CD8-positive, alpha-beta T cell (primary cell): ENCODE measurements at regions of chr14 and their contacts with region 1.

Region 1: DNA sequence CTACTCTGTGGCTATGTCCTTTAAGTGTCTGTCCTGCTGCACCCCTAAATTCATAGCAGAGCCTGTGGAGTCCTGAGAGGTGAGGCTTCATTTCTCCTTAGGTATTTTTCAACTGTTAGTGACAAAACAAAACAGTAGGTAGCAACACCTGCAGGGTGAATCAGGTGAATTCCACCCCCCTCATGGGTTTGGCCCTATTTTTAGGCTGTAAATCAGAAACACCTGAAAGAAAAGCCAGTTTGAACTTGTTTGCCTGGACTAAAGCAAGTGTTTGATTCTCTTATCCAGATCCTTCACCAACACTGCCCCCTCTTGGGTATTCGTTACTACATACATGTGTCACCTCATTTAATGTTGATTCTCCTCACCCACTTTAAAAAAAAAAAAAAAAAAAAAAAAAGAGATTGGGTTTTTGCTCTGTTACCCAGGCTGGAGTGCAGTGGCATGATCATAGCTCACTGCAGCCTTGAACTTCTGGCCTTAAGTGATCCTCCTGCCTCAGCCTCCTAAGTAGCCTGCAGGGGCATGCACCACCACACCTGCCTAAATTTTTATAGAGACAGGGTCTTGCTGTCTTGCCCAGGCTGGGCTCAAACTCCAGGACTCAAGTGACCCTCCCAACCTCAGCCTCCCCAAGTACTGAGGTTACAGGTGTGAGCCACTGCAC is 10.3 kb downstream of the TBPL2 start:
- DNase-seq: peak in 8 of 9 experiments; percentile 19 to 83 (median 46)
- ATAC-seq: peak; percentile 92
- H3K4me3 ChIP-seq: no peak overlapping the region
- H3K4me3 Mint-ChIP-seq: no peak overlapping the region
- H3K27ac ChIP-seq: no peak overlapping the region
- H3K27ac Mint-ChIP-seq: peak overlapping the region; percentile 72
- H3K4me1 ChIP-seq: peaks cover 24% of the 10 kb centered on the region
- H3K4me1 Mint-ChIP-seq: peaks cover 33% of the 10 kb centered on the region
- H3K27me3 ChIP-seq: no peaks in the 10 kb centered on the region
- H3K27me3 Mint-ChIP-seq: no peaks in the 10 kb centered on the region
- CTCF ChIP-seq: peak; percentile 50

Region 2: GRCh38 chr14:55094321-55095157 is 335.6 kb before region 1 on chr14:
- CTCF ChIA-PET with region 1: interaction called, 5 read pairs
- POLR2A ChIA-PET with region 1: no interaction called
- intact Hi-C with region 1: loop called in 1 of 2 experiments (anchors 1 kb)
- DNase-seq: no peak
- ATAC-seq: no peak
- H3K4me3 ChIP-seq: no peak overlapping the region
- H3K4me3 Mint-ChIP-seq: no peak overlapping the region
- H3K27ac ChIP-seq: no peak overlapping the region
- H3K27ac Mint-ChIP-seq: no peak overlapping the region
- H3K4me1 ChIP-seq: peaks cover 12% of the 10 kb centered on the region
- H3K4me1 Mint-ChIP-seq: peaks cover 16% of the 10 kb centered on the region
- H3K27me3 ChIP-seq: no peaks in the 10 kb centered on the region
- H3K27me3 Mint-ChIP-seq: no peaks in the 10 kb centered on the region
- CTCF ChIP-seq: no peak

Region 3: DNA sequence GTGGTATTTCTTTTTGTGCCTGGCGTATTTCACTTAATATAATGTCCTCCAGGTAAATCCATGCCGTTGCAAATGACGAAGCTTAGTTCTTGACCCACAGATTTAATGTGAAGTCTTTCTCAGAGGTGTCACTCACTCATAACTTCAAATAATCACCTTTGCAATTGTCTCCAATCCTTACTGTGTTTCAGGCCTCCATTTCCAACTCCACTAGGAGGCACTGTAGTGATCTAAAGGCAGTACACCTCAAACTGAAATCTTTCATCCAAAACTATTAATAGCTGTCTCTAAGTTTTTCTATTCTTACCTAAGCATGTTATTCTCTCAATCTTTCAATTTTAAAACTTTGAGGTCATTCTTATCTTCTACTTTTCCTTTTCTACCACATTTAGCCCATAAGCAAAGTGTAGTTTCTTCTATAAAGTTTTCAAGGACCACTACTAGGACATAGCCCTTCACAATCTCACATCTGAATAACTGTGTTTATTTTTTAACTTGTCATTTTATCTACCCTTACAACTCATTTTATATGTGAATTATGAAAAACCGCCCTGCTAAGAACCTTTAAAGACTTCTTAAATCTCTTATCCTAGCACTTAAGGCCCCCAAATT is 184.4 kb before region 1 on chr14:
- CTCF ChIA-PET with region 1: interaction called, 10 read pairs
- POLR2A ChIA-PET with region 1: no interaction called
- intact Hi-C with region 1: loop called (anchors 1 kb)
- DNase-seq: peak in 5 of 9 experiments; percentile 7 to 66 (median 32)
- ATAC-seq: peak; percentile 52
- H3K4me3 ChIP-seq: no peak overlapping the region
- H3K4me3 Mint-ChIP-seq: no peak overlapping the region
- H3K27ac ChIP-seq: no peak overlapping the region
- H3K27ac Mint-ChIP-seq: no peak overlapping the region
- H3K4me1 ChIP-seq: no peaks in the 10 kb centered on the region
- H3K4me1 Mint-ChIP-seq: no peaks in the 10 kb centered on the region
- H3K27me3 ChIP-seq: no peaks in the 10 kb centered on the region
- H3K27me3 Mint-ChIP-seq: peaks cover 13% of the 10 kb centered on the region
- CTCF ChIP-seq: peak; percentile 61

Region 4: GRCh38 chr14:55366271-55366670 is 63.9 kb before region 1 on chr14:
- CTCF ChIA-PET with region 1: no interaction called
- POLR2A ChIA-PET with region 1: no interaction called
- intact Hi-C with region 1: no loop called
- DNase-seq: no peak
- ATAC-seq: no peak
- H3K4me3 ChIP-seq: no peak overlapping the region
- H3K4me3 Mint-ChIP-seq: no peak overlapping the region
- H3K27ac ChIP-seq: no peak overlapping the region
- H3K27ac Mint-ChIP-seq: no peak overlapping the region
- H3K4me1 ChIP-seq: no peaks in the 10 kb centered on the region
- H3K4me1 Mint-ChIP-seq: no peaks in the 10 kb centered on the region
- H3K27me3 ChIP-seq: no peaks in the 10 kb centered on the region
- H3K27me3 Mint-ChIP-seq: no peaks in the 10 kb centered on the region
- CTCF ChIP-seq: no peak

Region 5: DNA sequence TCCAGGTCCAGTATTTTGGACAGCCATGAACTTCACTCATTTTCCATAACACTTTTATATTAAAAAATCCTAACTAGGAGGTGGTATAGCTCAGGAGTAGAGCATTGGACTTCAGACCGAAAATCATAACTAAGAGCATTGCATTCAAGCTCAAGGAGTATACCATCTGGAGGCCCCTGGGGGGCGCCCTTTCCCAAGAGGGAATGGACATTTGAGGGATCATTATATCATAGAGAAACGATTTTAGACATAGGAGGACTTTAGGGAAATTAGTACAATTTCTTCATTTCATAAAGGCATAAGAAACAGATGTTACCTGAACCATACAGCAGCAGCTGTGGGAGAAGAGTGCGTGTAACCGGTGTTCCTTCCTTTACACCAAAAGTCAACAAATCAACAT is 13.3 kb before region 1 on chr14:
- CTCF ChIA-PET with region 1: interaction called, 10 read pairs
- POLR2A ChIA-PET with region 1: no interaction called
- intact Hi-C with region 1: no loop called
- DNase-seq: peak in 3 of 9 experiments; percentile 13 to 36 (median 31)
- ATAC-seq: no peak
- H3K4me3 ChIP-seq: no peak overlapping the region
- H3K4me3 Mint-ChIP-seq: no peak overlapping the region
- H3K27ac ChIP-seq: no peak overlapping the region
- H3K27ac Mint-ChIP-seq: no peak overlapping the region
- H3K4me1 ChIP-seq: peaks cover 6% of the 10 kb centered on the region
- H3K4me1 Mint-ChIP-seq: peaks cover 8% of the 10 kb centered on the region
- H3K27me3 ChIP-seq: no peaks in the 10 kb centered on the region
- H3K27me3 Mint-ChIP-seq: no peaks in the 10 kb centered on the region
- CTCF ChIP-seq: peak; percentile 44

Region 6: DNA sequence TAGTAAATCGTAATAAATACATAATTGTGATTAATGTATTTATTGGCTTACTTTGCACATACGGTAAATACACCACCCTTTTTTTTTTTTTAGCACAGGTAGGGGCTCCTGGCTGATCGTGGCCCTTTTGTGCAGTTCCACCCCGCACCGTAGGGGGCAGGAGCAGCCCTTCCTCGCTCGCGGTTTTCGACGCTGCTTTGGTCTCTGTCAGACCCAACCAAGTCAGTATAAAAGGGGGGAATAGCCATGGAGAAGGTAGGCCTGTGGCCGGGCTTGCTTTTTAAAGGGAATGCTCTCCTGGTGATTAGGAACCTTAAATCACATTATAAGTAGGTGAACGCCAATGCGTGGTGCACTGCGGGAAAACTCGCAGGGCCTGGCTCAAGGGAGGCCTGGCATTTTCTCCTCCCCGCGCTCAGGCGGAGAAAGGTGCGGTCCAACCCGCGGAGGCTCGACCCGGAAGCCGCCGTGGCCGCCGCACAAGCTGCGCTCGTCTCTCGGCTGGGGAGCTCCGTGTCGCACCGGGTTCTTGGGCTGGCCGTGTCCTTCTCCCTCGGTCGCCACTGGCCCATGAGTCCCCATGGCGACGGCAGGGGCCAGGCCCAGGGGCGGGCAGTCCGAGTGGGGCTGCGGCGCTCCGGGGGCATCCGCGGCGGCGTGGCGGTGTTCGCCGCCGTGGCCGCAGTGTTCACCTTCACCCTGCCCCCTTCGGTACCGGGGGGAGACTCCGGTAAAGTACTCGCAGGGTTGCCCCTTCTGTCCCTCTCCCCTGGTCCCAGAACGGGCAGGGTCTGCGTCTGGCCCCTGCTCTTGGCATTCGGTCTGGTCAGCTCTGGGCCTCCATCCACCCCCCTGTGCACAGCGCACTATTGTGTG is 1149.4 kb after region 1 on chr14 and contains the start of gene TMEM260:
- CTCF ChIA-PET with region 1: no interaction called
- POLR2A ChIA-PET with region 1: no interaction called
- intact Hi-C with region 1: loop called in 1 of 2 experiments (anchors 10 kb)
- DNase-seq: peak; percentile 84 to 95 (median 91)
- ATAC-seq: peak; percentile 93
- H3K4me3 ChIP-seq: peak within 1 kb of the TSS; percentile 74 to 83
- H3K4me3 Mint-ChIP-seq: peak within 1 kb of the TSS; percentile 90
- H3K27ac ChIP-seq: peak within 1 kb of the TSS; percentile 72 to 75
- H3K27ac Mint-ChIP-seq: peak within 1 kb of the TSS; percentile 94
- H3K4me1 ChIP-seq: peaks cover 27% of the 10 kb centered on the region
- H3K4me1 Mint-ChIP-seq: peaks cover 40% of the 10 kb centered on the region
- H3K27me3 ChIP-seq: no peaks in the 10 kb centered on the region
- H3K27me3 Mint-ChIP-seq: peaks cover 2% of the 10 kb centered on the region
- CTCF ChIP-seq: peak; percentile 82
- total RNA-seq, gene TMEM260: 4.3 to 6.4 TPM